Heart left ventricle (tissue), 16 donors: ENCODE measurements at regions of chr13 and their contacts with region 1.

Region 1: GRCh38 chr13:100710176-100710575 is 35.6 kb upstream of the TMTC4 start:
- DNase-seq: no peak
- ATAC-seq: no peak
- H3K4me3 ChIP-seq: no peak overlapping the region
- H3K27ac ChIP-seq: no peak overlapping the region
- H3K4me1 ChIP-seq: no peaks in the 10 kb centered on the region
- H3K27me3 ChIP-seq: no peaks in the 10 kb centered on the region
- CTCF ChIP-seq: no peak
- POLR2A ChIP-seq: no peak

Region 2: GRCh38 chr13:101098873-101099272 is 388.7 kb after region 1 on chr13:
- intact Hi-C with region 1: loop called in 1 of 10 experiments (anchors 5 kb)
- DNase-seq: no peak
- ATAC-seq: no peak
- H3K4me3 ChIP-seq: no peak overlapping the region
- H3K27ac ChIP-seq: no peak overlapping the region
- H3K4me1 ChIP-seq: no peaks in the 10 kb centered on the region
- H3K27me3 ChIP-seq: no peaks in the 10 kb centered on the region
- CTCF ChIP-seq: no peak
- POLR2A ChIP-seq: no peak